ENCODE measurements at regions of chr12 and their contacts with region 1.

Region 1: GRCh38 chr12:3168223-3169221 is 91.3 kb downstream of the TSPAN9 start:
- DNase-seq: no peak
- H3K4me3 ChIP-seq: no peak overlapping the region
- H3K27ac ChIP-seq: peak overlapping the region in 1 of 2 experiments; percentile 95; a peak in 2 of 4 replicates
- H3K4me1 ChIP-seq: peaks cover 49 to 56% of the 10 kb centered on the region in 2 experiments
- H3K27me3 ChIP-seq: no peaks in the 10 kb centered on the region
- CTCF ChIP-seq: no peak
- EP300 ChIP-seq: peak in 1 of 2 experiments; percentile 39; a peak in 1 of 4 replicates
- RAD21 ChIP-seq: no peak

Region 2: DNA sequence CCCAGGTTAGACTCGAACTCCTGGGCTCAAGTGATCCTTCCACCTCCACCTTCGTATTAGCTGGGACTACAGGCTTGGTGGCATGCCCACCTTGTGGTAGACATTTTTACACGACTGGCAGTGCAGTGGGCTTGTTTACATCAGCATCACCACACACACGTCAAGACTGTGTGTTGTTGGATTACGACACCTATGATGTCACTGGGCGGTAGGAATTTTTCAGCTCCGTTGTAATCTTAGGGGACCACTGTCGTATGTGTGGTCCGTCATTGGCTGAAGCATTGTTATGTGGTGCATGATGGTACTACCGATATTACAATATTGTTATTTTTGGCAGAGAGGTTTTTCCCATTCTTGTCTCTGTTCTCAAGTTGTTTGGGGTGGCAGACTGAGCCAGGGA is 40.7 kb before region 1 on chr12:
- CTCF ChIA-PET with region 1: no interaction called
- POLR2A ChIA-PET with region 1: no interaction called
- DNase-seq: no peak
- H3K4me3 ChIP-seq: no peak overlapping the region
- H3K27ac ChIP-seq: no peak overlapping the region
- H3K4me1 ChIP-seq: peaks cover 17 to 19% of the 10 kb centered on the region in 2 experiments
- H3K27me3 ChIP-seq: no peaks in the 10 kb centered on the region
- CTCF ChIP-seq: no peak
- EP300 ChIP-seq: no peak
- RAD21 ChIP-seq: no peak

Region 3: DNA sequence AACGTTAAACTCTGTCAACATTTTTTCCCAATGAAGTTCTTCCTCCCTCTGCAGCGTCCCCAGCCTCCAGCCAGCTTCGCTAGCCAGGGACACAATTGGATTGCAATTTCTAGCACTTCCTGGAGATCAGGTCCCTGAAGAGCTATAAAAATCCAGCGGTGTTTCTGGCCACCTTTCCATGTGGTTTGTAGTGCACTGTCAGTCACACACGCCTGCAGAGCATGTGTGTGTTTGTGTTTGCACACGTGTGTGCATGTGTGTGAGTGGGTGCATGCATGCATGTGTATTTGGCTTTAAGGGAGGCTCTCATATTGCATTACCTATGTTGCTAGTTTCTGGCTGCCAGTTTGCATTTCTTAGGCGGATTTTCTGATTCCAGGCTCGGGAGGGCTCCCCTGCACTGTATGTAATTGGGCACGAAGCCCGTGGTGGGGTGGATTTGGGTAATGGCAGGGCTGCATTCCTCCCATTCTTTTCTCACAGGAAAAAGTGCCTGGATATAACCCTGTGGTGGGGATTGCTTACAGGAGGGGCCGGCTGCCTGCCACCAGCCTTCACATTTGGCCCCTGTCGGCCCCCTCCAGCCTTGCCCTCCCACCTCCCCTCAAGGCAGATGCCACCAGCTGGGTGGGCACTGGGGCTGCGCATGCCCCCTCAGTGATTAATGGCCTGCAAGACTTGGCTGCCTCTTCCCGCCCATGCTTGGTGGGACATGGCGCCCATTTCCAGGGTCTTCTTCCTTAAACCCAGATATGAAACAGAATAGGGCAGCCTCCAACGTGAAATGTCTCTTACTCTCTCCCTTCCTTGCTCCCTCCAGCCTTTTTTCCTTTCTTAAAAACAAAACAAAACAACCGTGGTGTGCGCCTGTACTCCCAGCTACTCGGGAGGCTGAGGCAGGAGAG is 17.3 kb before region 1 on chr12:
- CTCF ChIA-PET with region 1: interaction called, 11 read pairs
- POLR2A ChIA-PET with region 1: no interaction called
- DNase-seq: peak; percentile 22
- H3K4me3 ChIP-seq: no peak overlapping the region
- H3K27ac ChIP-seq: no peak overlapping the region
- H3K4me1 ChIP-seq: peaks cover 7 to 32% of the 10 kb centered on the region in 2 experiments; a peak in 3 of 4 replicates
- H3K27me3 ChIP-seq: no peaks in the 10 kb centered on the region
- CTCF ChIP-seq: no peak
- EP300 ChIP-seq: no peak
- RAD21 ChIP-seq: no peak

Region 4: DNA sequence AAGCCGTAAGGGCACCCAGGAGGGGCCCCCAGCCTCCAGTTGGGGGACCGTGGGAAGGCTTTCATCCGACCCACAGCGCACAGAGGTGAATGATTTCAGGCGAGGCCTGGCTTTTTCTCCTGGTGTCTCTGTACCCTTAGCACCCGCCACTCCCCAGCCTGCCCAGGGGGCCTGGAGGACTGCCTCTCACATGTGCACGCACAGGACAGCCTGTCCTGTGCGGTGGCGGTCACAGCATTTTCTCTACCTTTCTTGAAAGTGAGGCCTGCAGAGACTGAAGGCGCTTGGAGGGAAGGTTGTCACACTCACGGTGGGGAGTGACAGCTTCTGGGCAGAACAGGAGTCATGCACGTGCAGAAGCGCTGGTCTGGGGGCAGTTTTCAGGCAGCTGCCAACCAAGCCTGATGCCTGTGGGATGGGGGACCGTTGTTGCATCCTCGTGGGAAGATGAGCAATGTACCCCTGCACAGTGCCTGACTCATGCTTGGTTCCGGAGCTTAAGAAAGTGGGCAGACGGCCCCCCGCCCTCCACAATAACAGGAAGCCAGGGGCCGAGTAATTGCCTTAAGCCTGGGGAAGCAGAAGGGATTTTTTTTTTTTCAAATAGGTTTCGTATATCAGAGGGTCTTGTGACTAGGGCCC is 56.8 kb after region 1 on chr12:
- CTCF ChIA-PET with region 1: no interaction called
- POLR2A ChIA-PET with region 1: no interaction called
- DNase-seq: no peak
- H3K4me3 ChIP-seq: no peak overlapping the region
- H3K27ac ChIP-seq: peak overlapping the region in 1 of 2 experiments; percentile 91; a peak in 2 of 4 replicates
- H3K4me1 ChIP-seq: peaks cover 23 to 40% of the 10 kb centered on the region in 2 experiments; a peak in 3 of 4 replicates
- H3K27me3 ChIP-seq: no peaks in the 10 kb centered on the region
- CTCF ChIP-seq: no peak
- EP300 ChIP-seq: no peak
- RAD21 ChIP-seq: no peak

Measured in SK-N-SH (cell line).